Left cardiac atrium (tissue), 4 donors: ENCODE measurements at regions of chr10 and their contacts with region 1.

Region 1: GRCh38 chr10:21273400-21273932 is 252.0 kb downstream of the SKIDA1 start:
- DNase-seq: no peak
- ATAC-seq: peak in 1 of 2 donors; percentile 21

Region 2: DNA sequence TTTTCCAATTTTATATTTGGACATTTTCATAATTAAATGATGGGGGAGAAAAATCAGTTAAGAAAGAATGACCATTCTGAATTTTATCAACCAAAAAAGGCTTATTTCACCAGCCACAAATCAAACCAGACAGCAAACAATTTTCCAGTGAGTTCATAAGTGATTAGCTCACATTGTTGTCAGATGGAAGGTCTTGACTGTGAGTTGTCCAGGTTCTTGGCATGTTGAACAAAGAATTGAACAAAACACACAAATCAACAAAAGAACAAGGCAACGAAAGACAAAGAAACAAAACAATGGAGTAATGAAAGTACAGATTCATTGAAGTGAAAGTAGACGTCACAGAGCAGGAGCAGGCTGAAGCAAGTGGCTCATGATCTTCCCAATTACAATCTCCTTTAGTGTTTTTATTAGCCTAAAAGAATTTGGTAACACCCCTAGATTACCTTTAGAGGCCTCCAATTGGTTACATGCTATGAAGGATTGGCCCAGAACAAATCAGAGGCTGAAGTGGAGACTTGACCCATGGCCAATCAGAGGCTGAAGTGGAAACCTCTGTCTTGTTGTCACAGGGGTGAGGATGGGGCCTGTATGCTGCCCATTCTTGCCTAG is 625.1 kb before region 1 on chr10:
- intact Hi-C with region 1: no loop called
- DNase-seq: no peak
- ATAC-seq: no peak

Region 3: GRCh38 chr10:20858292-20859124 is 415.0 kb before region 1 on chr10:
- intact Hi-C with region 1: loop called in 1 of 2 experiments (anchors 5 kb)
- DNase-seq: no peak
- ATAC-seq: no peak

Region 4: DNA sequence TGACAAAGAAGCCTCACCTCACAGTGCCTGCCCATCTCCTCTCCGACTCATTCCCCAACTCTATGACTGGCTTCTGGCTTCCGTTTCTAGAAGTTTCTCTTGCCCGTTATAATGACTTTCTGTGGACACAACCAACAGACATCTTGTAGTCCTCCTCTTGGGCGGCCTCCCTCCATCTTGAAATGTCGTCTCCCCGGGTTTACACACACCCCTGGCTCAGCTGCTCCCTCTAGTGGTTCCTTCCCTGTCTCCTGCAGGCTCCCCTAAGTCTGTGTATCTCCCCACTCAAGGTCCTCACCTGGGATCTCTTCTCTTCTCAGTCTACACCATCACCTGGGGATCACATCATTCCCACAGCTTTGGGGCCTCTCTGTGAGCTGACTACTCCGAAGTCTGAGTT is 252.9 kb before region 1 on chr10:
- intact Hi-C with region 1: no loop called
- DNase-seq: no peak
- ATAC-seq: peak in 1 of 2 donors; percentile 49

Region 5: GRCh38 chr10:21184216-21184615 is 89.2 kb before region 1 on chr10:
- intact Hi-C with region 1: no loop called
- DNase-seq: no peak
- ATAC-seq: no peak

Region 6: GRCh38 chr10:21230219-21230618 is 43.2 kb before region 1 on chr10:
- intact Hi-C with region 1: no loop called
- DNase-seq: no peak
- ATAC-seq: no peak